GM10248 (cell line): ENCODE measurements at regions of chr15 and their contacts with region 1.

Region 1: GRCh38 chr15:63487076-63487757 is 17.2 kb upstream of the USP3 start:
- DNase-seq: peak; percentile 81
- CTCF ChIP-seq: peak; percentile 85

Region 2: DNA sequence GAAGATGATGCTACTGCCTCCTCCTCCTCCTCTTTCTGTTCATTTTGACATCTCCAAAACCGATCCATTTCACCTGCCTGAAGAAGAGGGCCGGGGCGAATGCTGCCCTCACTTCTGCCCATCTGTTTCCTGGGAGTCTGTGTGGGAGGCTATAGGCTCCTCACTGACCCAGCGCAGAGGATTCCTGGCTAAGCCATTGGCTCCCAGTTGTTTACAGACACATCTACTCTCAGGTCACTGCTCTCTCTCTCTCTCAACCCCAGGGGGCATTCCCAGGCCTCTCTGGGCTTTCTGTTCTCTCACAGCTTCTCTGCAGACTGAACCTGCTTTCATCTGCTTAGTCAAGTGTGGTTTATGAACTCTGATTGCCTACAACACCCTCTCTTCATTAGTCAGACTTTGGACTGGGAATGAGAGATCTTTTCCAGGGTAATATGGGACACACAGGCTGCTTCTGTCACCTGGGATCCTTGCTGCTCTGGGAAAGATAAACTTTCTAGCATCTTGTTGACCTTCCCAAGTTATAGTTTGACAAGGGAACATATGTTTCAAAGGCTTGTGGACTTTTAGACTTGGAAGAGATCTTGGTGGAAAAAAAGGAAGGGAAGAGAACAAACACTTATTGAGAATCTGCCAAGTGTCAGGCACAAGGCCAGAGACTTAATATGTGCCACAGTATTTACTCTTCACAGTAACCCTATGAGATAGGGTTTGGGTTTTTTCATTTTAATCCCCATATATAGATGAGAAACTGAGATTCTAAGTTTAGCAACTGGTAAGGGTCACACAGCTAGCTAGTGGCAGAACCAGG is 13.0 kb before region 1 on chr15:
- CTCF ChIA-PET with region 1: interaction called, 68 read pairs
- POLR2A ChIA-PET with region 1: interaction called, 5 read pairs
- DNase-seq: peak; percentile 53
- CTCF ChIP-seq: no peak

Region 3: DNA sequence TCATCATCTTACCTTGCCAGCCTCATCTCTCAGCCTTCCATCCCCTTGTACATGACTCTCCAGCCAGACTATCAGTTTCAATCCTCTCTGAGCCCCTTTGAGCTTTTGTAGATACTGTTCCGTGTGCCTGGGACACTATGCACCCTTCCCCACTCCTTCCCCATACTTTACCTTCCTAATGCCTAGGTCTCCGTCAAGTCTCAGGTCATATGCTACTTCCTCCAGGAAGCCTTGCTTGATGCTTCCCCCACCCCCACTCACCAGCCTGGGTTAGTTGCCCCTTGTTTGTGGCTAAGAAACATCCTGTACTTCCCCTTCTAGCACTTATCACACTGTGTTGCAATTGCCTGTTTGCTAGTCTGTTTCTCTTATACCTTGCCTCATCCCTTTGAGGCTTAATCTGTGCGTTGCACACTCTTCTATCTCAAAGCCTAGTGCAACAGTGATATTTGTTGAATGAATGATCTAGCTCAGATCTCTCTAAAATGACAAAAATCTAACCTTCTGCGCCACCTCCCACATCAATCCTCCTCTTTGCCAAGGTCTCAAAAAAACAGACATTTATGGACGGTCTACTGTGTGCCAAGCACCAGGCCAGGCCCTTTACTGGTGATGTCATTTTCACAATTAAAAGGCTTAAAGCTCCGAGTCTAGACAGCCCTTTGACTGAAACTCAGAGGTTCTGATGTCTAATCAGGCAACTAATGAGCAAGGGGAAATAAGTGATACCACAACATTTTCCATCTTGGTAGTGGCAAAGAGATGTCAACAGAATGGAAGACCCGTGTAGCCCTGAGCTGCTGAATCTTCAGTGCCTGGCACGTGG is 10.6 kb after region 1 on chr15:
- CTCF ChIA-PET with region 1: interaction called, 95 read pairs
- POLR2A ChIA-PET with region 1: no interaction called
- DNase-seq: no peak
- CTCF ChIP-seq: no peak

Region 4: DNA sequence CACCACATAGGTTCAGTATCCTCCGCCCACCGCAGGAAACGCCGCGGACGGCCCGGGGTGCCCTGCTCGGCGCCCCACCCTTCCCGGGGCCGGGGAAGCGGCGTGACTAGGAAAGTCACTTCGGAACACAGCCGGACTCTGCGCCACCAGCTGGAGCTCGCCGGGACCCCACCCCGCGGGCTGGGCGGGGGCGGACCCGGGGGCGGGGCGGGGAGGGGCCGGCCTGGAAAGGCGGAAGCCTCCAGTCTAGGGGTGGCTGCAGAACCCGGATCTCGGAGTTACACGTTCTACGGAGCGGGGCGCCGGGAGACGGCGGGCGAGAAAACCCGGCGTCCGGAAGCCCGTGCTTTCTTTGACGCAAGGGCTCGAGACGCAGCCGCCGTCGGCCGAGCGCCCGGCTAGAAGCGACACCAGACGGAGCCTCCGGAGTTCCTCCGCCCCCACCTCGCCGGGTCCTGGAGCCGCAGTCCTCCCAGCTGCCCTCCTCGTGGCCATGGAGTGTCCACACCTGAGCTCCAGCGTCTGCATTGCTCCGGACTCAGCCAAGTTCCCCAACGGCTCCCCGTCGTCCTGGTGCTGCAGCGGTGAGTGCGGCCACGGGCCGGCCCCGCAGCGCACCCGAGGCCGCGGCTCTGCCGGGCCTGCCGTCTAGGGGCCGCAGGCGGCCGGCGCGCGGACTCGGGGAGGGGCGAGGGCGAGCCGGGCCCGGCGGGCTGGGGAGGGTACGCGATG is 17.2 kb after region 1 on chr15 and contains the start of gene USP3:
- CTCF ChIA-PET with region 1: interaction called, 95 read pairs
- POLR2A ChIA-PET with region 1: interaction called, 4 read pairs
- DNase-seq: peak; percentile 91
- CTCF ChIP-seq: peak; percentile 20

Region 5: GRCh38 chr15:63531586-63531985 is 44.4 kb after region 1 on chr15:
- CTCF ChIA-PET with region 1: interaction called, 11 read pairs
- POLR2A ChIA-PET with region 1: no interaction called
- DNase-seq: no peak
- CTCF ChIP-seq: no peak

Region 6: DNA sequence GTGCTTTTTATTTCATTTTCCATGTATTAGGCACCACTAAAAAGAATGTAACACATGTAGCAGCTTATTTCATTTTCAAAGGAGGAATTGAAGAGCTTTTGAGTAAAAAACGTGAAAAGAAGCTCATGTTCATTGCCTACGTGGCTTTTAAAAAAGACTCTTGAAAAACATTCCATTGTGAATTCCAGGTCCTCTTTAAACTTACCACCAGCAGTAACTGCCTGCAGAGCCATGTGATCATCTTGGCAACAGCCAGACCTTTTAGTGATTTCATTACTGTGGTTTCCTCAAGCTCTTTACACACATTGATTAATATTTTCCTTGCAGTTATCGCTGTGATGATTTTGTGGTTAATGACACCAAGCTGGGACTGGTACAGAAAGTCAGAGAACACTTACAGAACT is 66.2 kb after region 1 on chr15:
- CTCF ChIA-PET with region 1: interaction called, 10 read pairs
- POLR2A ChIA-PET with region 1: no interaction called
- DNase-seq: no peak
- CTCF ChIP-seq: no peak

Region 7: DNA sequence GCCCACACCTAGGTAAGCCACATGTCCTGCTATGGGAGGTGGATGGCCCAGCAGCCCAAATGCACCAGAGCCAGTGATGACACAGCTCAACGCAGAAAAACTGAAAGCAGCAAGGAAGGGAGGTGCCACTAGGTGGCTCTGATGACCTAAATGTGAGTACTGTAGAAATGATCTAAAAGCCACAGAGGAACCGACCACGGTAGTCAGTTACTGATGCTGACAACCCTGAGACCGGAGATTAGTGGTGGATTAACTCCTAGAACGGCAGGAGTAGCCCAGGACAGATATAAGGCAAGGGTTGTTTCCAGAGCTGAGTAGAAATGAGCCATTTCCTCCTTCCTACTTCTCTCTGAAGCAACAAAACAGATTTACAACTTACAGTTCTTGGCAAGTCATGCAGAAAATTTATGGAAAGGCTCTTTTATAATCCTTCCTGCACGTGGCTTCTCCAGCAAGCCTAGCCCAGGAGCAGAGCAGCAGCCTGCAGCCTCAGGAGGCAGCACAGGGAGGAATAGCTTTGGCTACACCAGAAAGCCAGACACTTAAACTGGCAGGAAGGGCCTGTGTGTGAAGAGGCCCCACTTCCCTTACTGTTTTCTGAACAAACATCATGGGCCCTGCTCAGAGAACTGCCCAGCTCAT is 123.1 kb after region 1 on chr15:
- CTCF ChIA-PET with region 1: interaction called, 12 read pairs
- POLR2A ChIA-PET with region 1: no interaction called
- DNase-seq: peak; percentile 81
- CTCF ChIP-seq: peak; percentile 73